Psoas muscle (tissue), 8 donors: ENCODE measurements at regions of chr14 and their contacts with region 1.

Region 1: GRCh38 chr14:58713677-58714076 is 75.9 kb downstream of the DACT1 start:
- DNase-seq: no peak
- ATAC-seq: no peak
- H3K4me3 ChIP-seq: no peak overlapping the region
- H3K27ac ChIP-seq: no peak overlapping the region
- H3K4me1 ChIP-seq: no peaks in the 10 kb centered on the region
- H3K27me3 ChIP-seq: no peaks in the 10 kb centered on the region
- CTCF ChIP-seq: no peak

Region 2: DNA sequence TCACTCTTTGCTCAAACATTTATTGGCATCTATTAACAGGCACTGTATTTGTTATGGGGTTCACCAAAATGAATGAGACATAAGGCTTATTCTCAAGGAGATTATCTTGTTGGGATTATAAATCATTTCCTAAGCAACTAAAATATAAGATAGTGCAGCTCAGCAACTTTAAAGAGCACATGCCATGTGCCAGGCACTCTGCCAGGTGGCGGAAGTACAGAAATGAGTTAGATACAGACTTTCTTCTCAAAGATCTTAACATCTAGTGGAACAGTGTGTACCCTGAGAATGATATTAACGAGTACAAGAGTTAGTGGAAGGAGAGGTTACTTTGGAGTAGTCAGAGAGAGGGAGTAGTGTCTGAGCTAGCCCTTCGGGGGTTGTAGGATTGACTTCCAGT is 346.4 kb before region 1 on chr14:
- intact Hi-C with region 1: no loop called
- DNase-seq: no peak
- ATAC-seq: no peak
- H3K4me3 ChIP-seq: no peak overlapping the region
- H3K27ac ChIP-seq: no peak overlapping the region
- H3K4me1 ChIP-seq: no peaks in the 10 kb centered on the region
- H3K27me3 ChIP-seq: no peaks in the 10 kb centered on the region
- CTCF ChIP-seq: no peak

Region 3: GRCh38 chr14:58695514-58695913 is 18.2 kb before region 1 on chr14:
- intact Hi-C with region 1: loop called in 1 of 2 experiments (anchors 2 kb)
- DNase-seq: no peak
- ATAC-seq: no peak
- H3K4me3 ChIP-seq: no peak overlapping the region
- H3K27ac ChIP-seq: no peak overlapping the region
- H3K4me1 ChIP-seq: no peaks in the 10 kb centered on the region
- H3K27me3 ChIP-seq: no peaks in the 10 kb centered on the region
- CTCF ChIP-seq: no peak